Activated CD8-positive, alpha-beta memory T cell treated with anti-CD3 and anti-CD28 coated beads, Interleukin-2, amount 10 ng/mL, durations not matched to agents 7 days and 5 days (primary cell): ENCODE measurements at regions of chr10 and their contacts with region 1.

Region 1: DNA sequence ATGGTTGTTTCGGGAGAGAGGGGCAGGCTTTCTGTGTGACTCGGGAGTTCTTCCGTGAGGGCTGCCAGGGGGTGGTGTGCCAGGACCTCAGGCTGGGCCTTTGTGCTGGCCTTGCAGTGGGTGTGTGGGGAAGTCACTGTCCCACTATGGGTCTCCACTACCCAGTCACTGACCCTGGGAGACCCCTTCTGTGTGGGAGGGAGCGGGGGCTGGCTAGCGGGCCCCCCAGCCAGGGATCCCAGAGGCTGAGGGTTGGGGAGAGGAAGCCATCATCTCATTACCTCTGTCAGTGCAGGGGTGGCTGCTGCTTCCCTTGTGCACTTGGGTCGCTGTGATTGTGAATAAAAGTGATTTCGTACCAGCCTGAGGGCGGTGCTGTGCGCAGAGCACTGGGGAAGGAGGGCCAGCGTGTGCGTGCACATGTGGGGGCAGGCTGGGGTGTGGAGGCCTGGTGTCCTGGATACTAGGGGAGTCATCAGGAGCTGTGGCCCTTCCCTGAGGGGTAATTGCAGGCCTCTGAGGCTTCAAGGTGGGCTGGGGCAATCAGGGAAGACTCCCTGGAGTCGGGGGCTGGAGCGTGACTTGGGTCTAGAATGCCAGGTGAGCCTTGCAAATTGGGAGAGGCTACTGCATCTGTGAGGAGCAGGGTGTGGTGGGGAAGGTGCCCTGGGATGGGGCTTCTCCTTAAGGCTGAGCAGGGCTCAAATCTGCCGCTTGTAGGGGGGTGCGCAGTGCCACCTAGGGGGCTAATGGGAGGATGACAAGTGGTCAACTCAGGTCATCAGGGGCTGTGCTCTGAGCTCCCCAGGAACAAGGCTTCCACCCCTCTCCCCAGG is 98.9 kb downstream of the NEURL1 start:
- DNase-seq: peak; percentile 65
- ATAC-seq: peak; percentile 79
- H3K4me3 Mint-ChIP-seq: no peak overlapping the region
- H3K27ac Mint-ChIP-seq: no peak overlapping the region
- H3K4me1 Mint-ChIP-seq: peaks cover 2% of the 10 kb centered on the region
- H3K27me3 Mint-ChIP-seq: no peaks in the 10 kb centered on the region

Region 2: GRCh38 chr10:103605359-103606095 is 13.1 kb after region 1 on chr10:
- CTCF ChIA-PET with region 1: interaction called, 10 read pairs
- DNase-seq: peak; percentile 62
- ATAC-seq: peak; percentile 42
- H3K4me3 Mint-ChIP-seq: no peak overlapping the region
- H3K27ac Mint-ChIP-seq: no peak overlapping the region
- H3K4me1 Mint-ChIP-seq: peaks cover 2% of the 10 kb centered on the region
- H3K27me3 Mint-ChIP-seq: no peaks in the 10 kb centered on the region